PC-9 (cell line): ENCODE measurements at regions of chr19 and their contacts with region 1.

Region 1: GRCh38 chr19:41699231-41699967 is 9.0 kb upstream of the CEACAM5 start:
- DNase-seq: no peak
- H3K4me3 ChIP-seq: no peak overlapping the region
- H3K27ac ChIP-seq: no peak overlapping the region
- H3K4me1 ChIP-seq: 0 out of 2 replicates have a peak, but pooled peaks cover 10% of the 10 kb centered on the region
- H3K27me3 ChIP-seq: peaks cover 8% of the 10 kb centered on the region; the same call in 1 of the 2 replicates
- CTCF ChIP-seq: no peak

Region 2: GRCh38 chr19:41928221-41928683 is 228.9 kb after region 1 on chr19 and contains the start of gene ERFL:
- CTCF ChIA-PET with region 1: interaction called, 13 read pairs
- POLR2A ChIA-PET with region 1: no interaction called
- intact Hi-C with region 1: no loop called
- DNase-seq: peak in 1 of 2 experiments; percentile 39
- H3K4me3 ChIP-seq: peak within 1 kb of the TSS; percentile 59
- H3K27ac ChIP-seq: no peak within 1 kb of the TSS
- H3K4me1 ChIP-seq: peaks cover 9% of the 10 kb centered on the region; the same call in 1 of the 2 replicates
- H3K27me3 ChIP-seq: peaks cover 74% of the 10 kb centered on the region
- CTCF ChIP-seq: no peak
- total RNA-seq, gene ERFL: 0.65 and 0.98 TPM in 2 replicates